GM10248 (cell line): ENCODE measurements at regions of chr16 and their contacts with region 1.

Region 1: DNA sequence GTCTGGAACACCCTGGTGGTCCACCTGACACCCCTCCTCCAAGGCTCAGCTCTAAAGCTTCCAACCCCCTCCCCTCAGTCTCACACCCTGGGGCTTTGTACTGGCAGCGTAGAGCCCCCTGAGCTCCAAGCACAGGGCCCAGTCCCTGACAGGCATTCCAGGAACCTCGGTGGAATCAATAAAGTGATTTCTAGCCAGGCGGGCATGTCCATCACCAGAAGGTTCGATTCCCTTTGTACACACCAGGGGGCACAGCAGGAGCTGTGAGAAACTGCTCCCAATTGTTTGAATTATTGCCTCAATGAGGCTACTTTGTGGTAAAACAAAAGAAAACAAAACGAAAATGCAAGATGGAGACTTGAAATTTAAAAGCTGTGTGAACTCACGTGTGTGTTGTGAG is 51.8 kb downstream of the SMPD3 start:
- DNase-seq: no peak
- CTCF ChIP-seq: peak; percentile 40

Region 2: DNA sequence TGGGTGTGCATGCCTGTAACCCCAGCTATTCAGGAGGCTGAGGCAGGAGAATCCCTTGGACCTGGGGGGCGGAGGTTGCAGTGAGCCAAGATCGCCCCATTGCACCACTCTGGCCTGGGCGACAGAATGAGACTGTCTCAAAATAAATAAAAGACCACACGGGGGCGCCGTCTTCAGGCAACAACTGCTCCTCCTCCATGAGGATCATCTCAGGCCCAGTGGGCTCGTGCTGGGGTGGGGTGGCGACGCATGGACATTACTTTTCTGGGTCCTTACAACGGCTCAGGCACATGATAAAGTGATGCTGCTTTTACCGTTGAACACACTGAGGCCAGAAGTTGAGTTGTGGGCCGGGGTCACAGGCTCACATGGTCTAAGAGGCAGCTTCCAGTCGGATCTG is 29.5 kb before region 1 on chr16:
- CTCF ChIA-PET with region 1: interaction called, 12 read pairs
- POLR2A ChIA-PET with region 1: no interaction called
- DNase-seq: peak; percentile 62
- CTCF ChIP-seq: peak; percentile 49

Region 3: DNA sequence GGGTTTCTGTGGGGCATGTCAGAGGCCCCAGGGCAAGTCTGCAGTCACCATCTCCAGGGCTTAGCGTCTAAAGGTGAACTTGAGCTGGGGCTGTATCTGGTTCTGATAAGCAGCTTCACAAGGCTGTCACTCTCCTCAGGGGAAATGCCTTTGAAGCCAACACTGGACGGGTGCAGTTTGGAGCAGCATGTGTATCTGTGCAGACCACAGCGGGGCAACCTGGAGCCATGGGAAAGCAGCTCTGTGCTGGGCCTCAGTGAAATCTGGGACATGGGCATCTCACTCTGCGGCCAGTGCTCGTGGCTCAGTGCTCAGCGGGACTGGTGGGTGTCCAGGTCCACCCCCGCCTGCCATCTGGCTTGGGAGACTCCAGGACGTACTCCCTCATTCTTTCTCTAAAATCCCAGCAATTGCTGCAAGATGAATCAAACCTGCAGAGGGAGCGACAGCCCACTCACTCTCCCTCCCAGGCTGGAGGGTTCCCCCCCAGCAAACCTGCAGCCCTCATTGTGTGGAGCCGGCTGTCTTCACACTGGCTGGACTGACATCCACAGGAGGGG is 22.2 kb before region 1 on chr16:
- CTCF ChIA-PET with region 1: interaction called, 12 read pairs
- POLR2A ChIA-PET with region 1: no interaction called
- DNase-seq: no peak
- CTCF ChIP-seq: no peak

Region 4: GRCh38 chr16:68382296-68382718 is 14.2 kb before region 1 on chr16:
- CTCF ChIA-PET with region 1: interaction called, 20 read pairs
- POLR2A ChIA-PET with region 1: no interaction called
- DNase-seq: peak; percentile 65
- CTCF ChIP-seq: no peak

Region 5: DNA sequence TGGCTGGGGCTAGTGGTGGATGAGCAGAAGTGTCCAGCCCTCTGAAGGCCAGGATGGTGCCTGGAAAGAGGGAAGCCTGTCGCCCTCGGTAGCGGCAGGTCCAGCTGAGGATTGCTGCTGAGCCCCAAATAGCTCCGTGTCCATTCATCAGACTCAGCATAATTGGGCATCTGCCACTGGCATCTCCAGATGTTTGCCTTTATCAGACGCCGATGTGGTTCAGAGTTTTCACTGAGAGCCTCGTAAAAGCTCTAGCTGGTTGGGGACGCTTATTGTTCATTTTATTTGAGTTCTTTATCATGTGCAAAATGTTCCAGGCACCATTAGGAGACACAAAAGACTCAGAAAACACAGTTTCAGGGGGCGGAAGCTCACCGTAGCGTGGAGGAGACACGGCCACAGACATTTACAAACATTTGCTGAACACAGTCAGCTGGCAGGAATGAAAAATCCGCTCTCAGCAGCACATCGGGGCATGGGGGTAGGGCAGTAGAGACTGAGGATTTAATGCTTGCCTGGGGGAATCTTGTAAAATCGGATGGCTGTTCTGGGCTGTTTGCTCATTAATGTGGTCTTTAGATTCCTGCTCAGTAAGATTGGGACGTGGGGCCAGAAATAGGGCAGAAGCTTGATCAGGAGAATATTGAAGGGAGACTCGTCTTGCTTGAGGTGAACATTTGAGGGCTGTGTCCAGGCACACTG is 10.1 kb after region 1 on chr16:
- CTCF ChIA-PET with region 1: interaction called, 52 read pairs
- POLR2A ChIA-PET with region 1: no interaction called
- DNase-seq: no peak
- CTCF ChIP-seq: no peak

Region 6: GRCh38 chr16:68417711-68418301 is 21.3 kb after region 1 on chr16:
- CTCF ChIA-PET with region 1: interaction called, 52 read pairs
- POLR2A ChIA-PET with region 1: no interaction called
- DNase-seq: peak; percentile 74
- CTCF ChIP-seq: no peak